Ovary (tissue), 10 donors: ENCODE measurements at regions of chr4 and their contacts with region 1.

Region 1: DNA sequence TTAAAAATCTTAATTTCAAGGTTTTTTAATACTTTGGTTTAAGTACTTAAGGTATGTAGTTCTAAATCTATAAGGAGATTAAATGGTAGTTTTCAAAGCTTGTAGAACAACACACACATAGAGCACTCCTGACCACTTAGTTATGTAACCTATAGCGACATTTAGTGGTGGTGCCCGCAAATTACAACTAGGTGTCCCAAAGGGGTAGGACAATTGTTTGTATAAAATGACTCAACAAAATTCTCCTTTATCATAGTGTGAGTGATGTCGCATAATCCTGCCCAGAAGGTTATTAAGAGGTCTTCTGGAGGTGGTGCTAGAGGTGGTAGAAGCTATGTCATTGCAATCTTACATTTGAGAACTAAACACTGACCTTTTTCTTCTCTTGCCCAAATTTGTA is 373.0 kb upstream of the RASGEF1B start:
- DNase-seq: peak; percentile 15 to 80 (median 40)
- H3K4me3 ChIP-seq: no peak overlapping the region
- H3K27ac ChIP-seq: no peak overlapping the region
- H3K4me1 ChIP-seq: no peaks in the 10 kb centered on the region
- H3K27me3 ChIP-seq: no peaks in the 10 kb centered on the region
- CTCF ChIP-seq: peak; percentile 29 to 81 (median 72)
- EP300 ChIP-seq: no peak
- POLR2A ChIP-seq: no peak

Region 2: DNA sequence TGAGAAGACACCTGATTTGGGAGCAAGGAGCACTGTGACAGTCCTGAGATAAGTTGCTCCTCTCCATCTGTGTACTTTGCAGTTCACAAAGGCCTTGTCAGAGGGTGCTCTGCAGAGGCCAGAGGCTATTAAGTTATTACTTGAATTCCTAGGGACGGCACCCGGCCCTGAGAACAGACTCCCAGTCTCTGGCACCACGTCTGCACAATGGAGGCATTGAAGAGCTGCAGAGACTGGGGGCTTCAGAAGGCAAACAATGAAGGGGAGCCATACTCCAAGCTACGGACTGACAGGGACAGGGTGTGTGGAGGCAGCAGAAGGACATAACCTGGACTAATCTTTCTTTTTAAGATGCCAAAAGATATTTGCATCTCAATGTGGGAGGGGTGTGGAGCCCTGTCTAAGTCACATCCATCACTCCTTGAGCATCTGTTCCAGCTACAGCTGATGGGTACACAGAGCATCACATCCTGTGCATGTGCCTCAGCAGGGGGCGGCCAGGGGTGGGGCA is 384.5 kb before region 1 on chr4:
- intact Hi-C with region 1: loop called in 1 of 4 experiments (anchors 5 kb)
- DNase-seq: no peak
- H3K4me3 ChIP-seq: no peak overlapping the region
- H3K27ac ChIP-seq: no peak overlapping the region
- H3K4me1 ChIP-seq: no peaks in the 10 kb centered on the region
- H3K27me3 ChIP-seq: no peaks in the 10 kb centered on the region
- CTCF ChIP-seq: no peak
- EP300 ChIP-seq: no peak
- POLR2A ChIP-seq: no peak

Region 3: GRCh38 chr4:81471588-81472288 is 373.0 kb before region 1 on chr4 and contains the start of gene RASGEF1B:
- intact Hi-C with region 1: loop called in 2 of 4 experiments (anchors 5 kb)
- DNase-seq: peak; percentile 71 to 87 (median 86)
- H3K4me3 ChIP-seq: peak within 1 kb of the TSS; percentile 55
- H3K27ac ChIP-seq: peak within 1 kb of the TSS; percentile 53 to 69
- H3K4me1 ChIP-seq: no peaks in the 10 kb centered on the region
- H3K27me3 ChIP-seq: no peaks in the 10 kb centered on the region
- CTCF ChIP-seq: no peak
- EP300 ChIP-seq: no peak
- POLR2A ChIP-seq: peak; percentile 56
- total RNA-seq, gene RASGEF1B: 1.1 to 14.4 (median 4.3) TPM

Region 4: GRCh38 chr4:82569076-82569475 is 724.4 kb after region 1 on chr4:
- intact Hi-C with region 1: no loop called
- DNase-seq: no peak
- H3K4me3 ChIP-seq: no peak overlapping the region
- H3K27ac ChIP-seq: no peak overlapping the region
- H3K4me1 ChIP-seq: no peaks in the 10 kb centered on the region
- H3K27me3 ChIP-seq: no peaks in the 10 kb centered on the region
- CTCF ChIP-seq: no peak
- EP300 ChIP-seq: no peak
- POLR2A ChIP-seq: no peak